ENCODE measurements at regions of chr6 and their contacts with region 1.

Region 1: GRCh38 chr6:93858213-93858612 is 438.9 kb upstream of the EPHA7 start:
- DNase-seq: no peak
- H3K4me3 ChIP-seq: peak overlapping the region in 1 of 4 experiments; percentile 38; a peak in 1 of 8 replicates
- H3K27ac ChIP-seq: no peak overlapping the region
- H3K4me1 ChIP-seq: peaks cover 0 to 19% (median 10%) of the 10 kb centered on the region in 4 experiments; a peak in 5 of 7 replicates
- H3K27me3 ChIP-seq: no peaks in the 10 kb centered on the region
- CTCF ChIP-seq: no peak
- EP300 ChIP-seq: peak in 1 of 2 experiments; percentile 9; a peak in 1 of 3 replicates
- POLR2A ChIP-seq: no peak
- RAD21 ChIP-seq: no peak

Region 2: GRCh38 chr6:93842178-93842577 is 16.0 kb before region 1 on chr6:
- CTCF ChIA-PET with region 1: interaction called, 4 read pairs
- POLR2A ChIA-PET with region 1: interaction called, 12 read pairs
- DNase-seq: no peak
- H3K4me3 ChIP-seq: no peak overlapping the region
- H3K27ac ChIP-seq: no peak overlapping the region
- H3K4me1 ChIP-seq: peaks cover 0 to 2% (median 0%) of the 10 kb centered on the region in 4 experiments; a peak in 1 of 7 replicates
- H3K27me3 ChIP-seq: no peaks in the 10 kb centered on the region
- CTCF ChIP-seq: no peak
- EP300 ChIP-seq: no peak
- POLR2A ChIP-seq: no peak
- RAD21 ChIP-seq: no peak